ENCODE measurements at regions of chr13 and their contacts with region 1.

Region 1: DNA sequence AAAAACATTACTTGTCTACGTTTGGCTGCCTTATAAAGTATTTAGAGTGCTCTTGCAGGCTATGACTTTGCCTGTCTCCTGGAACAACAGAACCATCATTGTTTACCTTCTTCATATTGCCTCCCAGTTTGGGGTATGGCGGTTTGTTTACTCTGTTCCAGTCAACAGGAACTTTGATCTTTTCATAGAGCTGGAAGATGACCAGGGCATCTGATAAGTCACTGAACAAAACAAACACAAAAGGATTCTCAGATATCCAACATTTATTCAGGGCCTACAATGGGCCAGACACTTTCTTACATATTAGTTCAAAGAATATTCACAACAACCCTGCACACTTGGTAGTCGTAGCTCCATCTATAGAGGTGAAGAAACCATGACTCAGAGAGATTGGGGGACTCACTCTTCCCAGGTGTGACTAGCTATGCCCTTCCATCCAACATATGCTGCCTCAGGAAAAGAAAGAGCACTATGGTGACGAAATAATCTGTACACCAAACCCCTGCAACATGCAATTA is 38.4 kb upstream of the CPB2 start:
- DNase-seq: no peak
- ATAC-seq: no peak; the same call in 2 of the 3 replicates
- H3K4me3 ChIP-seq: no peak overlapping the region
- H3K27ac ChIP-seq: no peak overlapping the region
- H3K4me1 ChIP-seq: no peaks in the 10 kb centered on the region
- H3K27me3 ChIP-seq: no peaks in the 10 kb centered on the region
- CTCF ChIP-seq: no peak
- EP300 ChIP-seq: no peak
- POLR2A ChIP-seq: 0 out of 2 replicates have a peak, but pooled peaks have one; percentile 20
- RAD21 ChIP-seq: no peak

Region 2: GRCh38 chr13:46126552-46127357 is 16.5 kb before region 1 on chr13:
- CTCF ChIA-PET with region 1: interaction called, 25 read pairs
- POLR2A ChIA-PET with region 1: no interaction called
- RAD21 ChIA-PET with region 1: no interaction called
- SMC1A ChIA-PET with region 1: interaction called, 9 read pairs
- in situ Hi-C with region 1: no loop called
- intact Hi-C with region 1: no loop called
- DNase-seq: no peak
- ATAC-seq: peak; percentile 77
- H3K4me3 ChIP-seq: no peak overlapping the region
- H3K27ac ChIP-seq: no peak overlapping the region
- H3K4me1 ChIP-seq: no peaks in the 10 kb centered on the region
- H3K27me3 ChIP-seq: no peaks in the 10 kb centered on the region
- CTCF ChIP-seq: peak; percentile 92 to 98 (median 92); a peak in 5 of 6 replicates
- EP300 ChIP-seq: no peak
- POLR2A ChIP-seq: peak; percentile 65
- RAD21 ChIP-seq: peak; percentile 88